A549 (cell line): ENCODE measurements at regions of chr10 and their contacts with region 1.

Region 1: DNA sequence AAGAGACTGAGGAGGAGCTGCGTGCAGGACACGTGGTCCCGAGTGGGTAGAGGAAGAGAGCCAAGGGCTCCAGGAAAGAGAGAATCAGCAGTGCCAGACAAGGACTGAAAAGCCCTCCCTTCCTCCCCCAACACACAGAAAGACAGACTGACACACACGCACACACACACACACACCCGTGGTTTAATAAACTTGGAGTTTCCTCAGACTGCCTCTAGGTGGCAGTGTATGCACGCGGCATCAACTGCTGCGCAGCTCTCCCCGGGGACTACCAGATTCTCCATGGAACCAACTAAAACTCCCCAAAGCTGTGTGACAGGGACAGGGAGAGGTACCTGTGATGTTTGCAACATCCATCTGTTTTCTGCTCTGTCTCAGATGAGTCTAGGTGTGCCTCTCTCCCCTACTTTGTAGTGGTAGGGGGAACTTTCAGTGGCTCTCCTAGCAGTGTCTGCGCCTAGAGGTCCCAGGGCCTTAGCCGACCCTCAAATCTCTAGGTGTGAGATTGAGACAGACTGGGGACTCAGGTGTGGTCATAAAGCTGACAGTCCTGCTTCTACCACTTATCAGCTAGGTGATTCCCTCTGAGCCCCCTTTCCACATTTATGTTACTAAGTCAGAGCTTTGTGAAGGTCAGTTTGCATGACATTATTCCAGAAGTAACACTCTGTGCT is 9.3 kb upstream of the TSPAN14 start:
- DNase-seq: peak; percentile 83 to 89
- ATAC-seq: peak; percentile 88 to 92
- H3K4me3 ChIP-seq: no peak overlapping the region
- H3K27ac ChIP-seq: peak overlapping the region; percentile 64 to 80
- H3K4me1 ChIP-seq: peaks cover 26% of the 10 kb centered on the region
- CTCF ChIP-seq: peak; percentile 98
- EP300 ChIP-seq: no peak
- POLR2A ChIP-seq: no peak
- RAD21 ChIP-seq: peak; percentile 99

Region 2: DNA sequence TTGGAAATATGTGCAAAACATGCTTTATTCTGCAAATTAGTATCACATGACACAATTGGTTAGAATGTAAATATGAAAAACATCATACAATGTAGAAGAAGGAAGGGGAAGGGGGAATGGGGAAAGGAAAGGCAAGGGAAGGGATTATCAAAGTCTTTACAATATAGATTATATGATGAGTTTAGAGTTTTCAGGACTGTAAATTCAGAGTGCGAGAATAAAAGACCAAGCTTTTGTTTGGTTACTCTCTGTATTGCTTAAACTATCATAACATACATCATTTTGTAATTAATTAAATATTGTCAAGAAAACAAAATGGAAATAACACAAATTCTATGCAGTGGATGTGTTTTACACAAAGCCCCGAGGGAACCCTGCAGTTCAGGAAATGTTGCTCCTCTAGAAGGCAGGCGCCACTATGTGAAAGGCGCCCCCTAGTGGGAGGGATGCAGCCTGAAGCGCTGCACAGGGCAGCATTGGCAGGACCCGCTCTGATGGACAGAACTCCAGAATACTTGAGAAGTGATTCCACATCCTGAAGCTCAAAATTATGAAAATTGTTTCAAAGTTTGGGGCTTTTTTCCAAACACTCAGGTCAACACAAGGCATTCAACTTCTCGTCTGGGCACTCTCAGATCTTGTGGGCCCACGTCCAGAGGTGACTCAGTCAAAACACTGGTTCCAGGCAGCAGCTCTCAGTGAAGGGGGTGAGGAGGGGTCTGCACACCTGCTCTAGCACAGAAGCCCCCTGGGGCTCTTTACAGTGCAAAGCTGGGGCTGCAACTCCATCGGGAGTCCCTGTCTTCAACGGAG is 397.9 kb before region 1 on chr10:
- CTCF ChIA-PET with region 1: no interaction called
- POLR2A ChIA-PET with region 1: no interaction called
- DNase-seq: peak; percentile 63 to 66
- ATAC-seq: peak; percentile 94 to 98
- H3K4me3 ChIP-seq: no peak overlapping the region
- H3K27ac ChIP-seq: no peak overlapping the region
- H3K4me1 ChIP-seq: no peaks in the 10 kb centered on the region
- CTCF ChIP-seq: peak; percentile 88
- EP300 ChIP-seq: no peak
- POLR2A ChIP-seq: no peak
- RAD21 ChIP-seq: peak; percentile 68 to 70

Region 3: DNA sequence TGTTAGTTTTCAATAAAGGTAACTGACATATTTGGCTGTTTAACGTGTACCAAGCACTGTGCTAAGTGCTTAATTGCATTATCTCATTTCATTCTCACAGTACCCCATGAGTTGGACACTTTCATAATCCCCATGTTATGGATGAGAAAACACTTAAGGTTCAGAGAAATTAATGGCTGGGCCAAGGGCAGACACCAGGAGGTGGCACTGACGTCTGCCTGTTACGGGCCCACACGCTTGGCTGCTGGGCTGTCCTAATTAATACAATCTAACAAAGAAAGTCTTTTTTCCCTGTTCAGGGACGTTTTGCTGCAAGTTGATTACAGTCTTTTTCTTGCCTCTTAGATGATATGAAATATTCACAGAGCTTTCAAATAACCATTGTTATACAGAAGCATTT is 72.1 kb before region 1 on chr10:
- CTCF ChIA-PET with region 1: interaction called, 184 read pairs
- POLR2A ChIA-PET with region 1: no interaction called
- DNase-seq: no peak
- ATAC-seq: no peak
- H3K4me3 ChIP-seq: no peak overlapping the region
- H3K27ac ChIP-seq: no peak overlapping the region
- H3K4me1 ChIP-seq: no peaks in the 10 kb centered on the region
- CTCF ChIP-seq: no peak
- EP300 ChIP-seq: no peak
- POLR2A ChIP-seq: no peak
- RAD21 ChIP-seq: no peak

Region 4: GRCh38 chr10:80421707-80422536 is 22.9 kb before region 1 on chr10:
- CTCF ChIA-PET with region 1: interaction called, 48 read pairs
- POLR2A ChIA-PET with region 1: no interaction called
- DNase-seq: no peak
- ATAC-seq: no peak
- H3K4me3 ChIP-seq: no peak overlapping the region
- H3K27ac ChIP-seq: no peak overlapping the region
- H3K4me1 ChIP-seq: no peaks in the 10 kb centered on the region
- CTCF ChIP-seq: no peak
- EP300 ChIP-seq: no peak
- POLR2A ChIP-seq: no peak
- RAD21 ChIP-seq: no peak

Region 5: GRCh38 chr10:80477813-80478212 is 33.0 kb after region 1 on chr10:
- CTCF ChIA-PET with region 1: interaction called, 26 read pairs
- POLR2A ChIA-PET with region 1: no interaction called
- DNase-seq: peak; percentile 70 to 79
- ATAC-seq: peak; percentile 88 to 92
- H3K4me3 ChIP-seq: no peak overlapping the region
- H3K27ac ChIP-seq: peak overlapping the region; percentile 30 to 65; a peak in 4 of 6 replicates
- H3K4me1 ChIP-seq: peaks cover 51% of the 10 kb centered on the region
- CTCF ChIP-seq: no peak
- EP300 ChIP-seq: no peak
- POLR2A ChIP-seq: no peak
- RAD21 ChIP-seq: no peak

Region 6: DNA sequence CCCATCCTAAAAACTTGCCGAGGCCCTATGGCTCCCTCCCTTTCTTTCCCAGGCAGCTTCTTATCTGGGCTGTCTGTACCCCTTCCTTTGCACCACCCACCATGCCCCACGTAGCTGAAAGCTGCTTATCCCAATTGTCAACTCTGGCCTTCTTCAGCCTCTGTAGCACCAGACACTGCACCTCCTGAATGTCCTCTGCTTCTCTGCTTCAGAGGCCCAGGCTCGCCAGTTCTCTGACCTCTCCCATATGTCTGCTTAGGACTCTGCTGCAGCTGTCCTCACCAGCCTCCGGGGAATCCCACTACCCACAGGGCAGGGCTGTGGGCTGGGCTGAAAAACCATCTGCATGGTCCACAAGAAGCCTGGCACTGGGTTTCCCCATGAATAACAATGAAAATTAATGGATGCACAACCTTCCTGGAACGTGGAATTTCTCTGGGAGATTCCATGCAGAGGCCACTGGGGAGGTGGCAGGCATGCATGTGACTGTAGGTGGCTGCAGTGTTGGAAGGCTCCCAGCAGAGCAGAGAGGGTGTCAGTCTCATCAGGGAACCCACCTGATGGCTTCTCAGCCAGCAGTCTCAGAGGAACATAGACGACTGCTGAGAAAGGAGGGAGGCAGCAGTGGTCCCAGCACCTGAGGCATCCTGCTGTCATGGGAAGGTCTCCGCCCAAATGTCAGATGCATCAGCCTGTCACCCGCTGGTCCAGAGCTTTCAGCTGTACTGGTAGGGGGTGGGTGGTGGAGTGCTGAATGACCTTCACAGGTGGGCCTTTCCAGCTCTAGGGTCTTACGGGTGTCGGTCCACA is 76.1 kb after region 1 on chr10:
- CTCF ChIA-PET with region 1: interaction called, 928 read pairs
- POLR2A ChIA-PET with region 1: no interaction called
- DNase-seq: no peak
- ATAC-seq: no peak
- H3K4me3 ChIP-seq: no peak overlapping the region
- H3K27ac ChIP-seq: peak overlapping the region; percentile 27 to 62; a peak in 3 of 6 replicates
- H3K4me1 ChIP-seq: peaks cover 56% of the 10 kb centered on the region
- CTCF ChIP-seq: no peak
- EP300 ChIP-seq: no peak
- POLR2A ChIP-seq: no peak
- RAD21 ChIP-seq: no peak

Region 7: GRCh38 chr10:80552151-80552646 is 107.4 kb after region 1 on chr10:
- CTCF ChIA-PET with region 1: interaction called, 15 read pairs
- POLR2A ChIA-PET with region 1: no interaction called
- DNase-seq: no peak
- ATAC-seq: peak; percentile 52 to 72; a peak in 5 of 6 replicates
- H3K4me3 ChIP-seq: no peak overlapping the region
- H3K27ac ChIP-seq: no peak overlapping the region
- H3K4me1 ChIP-seq: no peaks in the 10 kb centered on the region
- CTCF ChIP-seq: no peak
- EP300 ChIP-seq: no peak
- POLR2A ChIP-seq: no peak
- RAD21 ChIP-seq: no peak